Right ventricle myocardium superior (tissue), 1 donor: ENCODE measurements at regions of chr7 and their contacts with region 1.

Region 1: GRCh38 chr7:42831718-42832431 is 80.0 kb downstream of the C7orf25 start:
- DNase-seq: peak; percentile 38
- ATAC-seq: peak; percentile 89

Region 2: GRCh38 chr7:41977151-41977651 is 854.7 kb before region 1 on chr7:
- intact Hi-C with region 1: loop called (anchors 10 kb)
- DNase-seq: no peak
- ATAC-seq: peak; percentile 80

Region 3: DNA sequence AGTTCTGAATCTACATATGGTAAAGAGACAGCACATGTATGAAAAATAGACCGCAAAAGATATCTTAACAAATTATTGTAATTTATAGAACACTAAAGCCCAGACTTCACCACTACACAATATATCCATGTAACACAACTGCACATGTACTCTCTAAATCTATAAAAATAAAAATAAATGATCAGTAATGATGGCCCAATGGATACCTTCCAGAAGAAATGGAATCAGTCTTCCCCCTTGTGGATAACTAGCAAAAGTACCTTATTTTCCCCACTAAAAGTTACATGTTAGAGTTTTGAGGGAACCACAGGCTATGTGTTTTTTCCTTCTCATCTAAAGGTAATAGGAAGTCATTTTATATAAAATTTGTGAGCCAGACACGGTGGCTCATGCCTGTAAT is 54.3 kb after region 1 on chr7:
- intact Hi-C with region 1: no loop called
- DNase-seq: no peak
- ATAC-seq: no peak

Region 4: GRCh38 chr7:43869006-43869866 is 1037.4 kb after region 1 on chr7 and contains the start of gene MRPS24:
- intact Hi-C with region 1: no loop called
- DNase-seq: peak; percentile 97
- ATAC-seq: peak; percentile 97
- total RNA-seq, gene MRPS24: 200 TPM